ENCODE measurements at regions of chr15 and their contacts with region 1.

Region 1: GRCh38 chr15:92714477-92715401 is 59.2 kb upstream of the FAM174B start:
- DNase-seq: peak; percentile 38 to 85 (median 65)
- ATAC-seq: peak; percentile 86 to 93 (median 90)
- H3K4me3 ChIP-seq: peak overlapping the region; percentile 50 to 72
- H3K4me3 Mint-ChIP-seq: peak overlapping the region; percentile 55 to 83 (median 70)
- H3K27ac ChIP-seq: no peak overlapping the region
- H3K27ac Mint-ChIP-seq: no peak overlapping the region
- H3K4me1 ChIP-seq: peaks cover 0 to 9% of the 10 kb centered on the region in 2 experiments
- H3K4me1 Mint-ChIP-seq: peaks cover 5 to 10% (median 8%) of the 10 kb centered on the region in 3 donors
- H3K27me3 ChIP-seq: peaks cover 0 to 32% of the 10 kb centered on the region in 2 experiments
- H3K27me3 Mint-ChIP-seq: peaks cover 10 to 29% of the 10 kb centered on the region in 2 donors

Region 2: DNA sequence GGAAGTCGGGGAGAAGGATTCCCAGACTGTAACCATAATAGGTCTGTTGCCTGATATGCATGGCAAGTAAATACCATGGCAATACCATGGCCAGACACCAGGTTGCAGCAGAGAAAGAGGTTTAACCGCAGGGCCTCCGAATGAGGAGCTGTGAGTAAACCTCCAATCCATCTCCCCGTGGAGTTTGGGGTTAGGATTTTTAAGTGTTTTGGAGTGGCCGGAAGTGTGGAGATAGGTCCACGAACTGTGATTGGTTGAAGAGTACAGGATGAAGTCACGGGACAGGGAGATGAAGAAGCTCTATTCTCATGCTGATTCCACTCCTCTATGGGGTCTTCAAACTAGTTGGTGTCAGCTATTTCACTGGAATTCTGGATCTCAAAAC is 193.1 kb before region 1 on chr15:
- CTCF ChIA-PET with region 1: interaction called, 3 to 13 read pairs
- POLR2A ChIA-PET with region 1: no interaction called
- DNase-seq: peak in 31 of 35 experiments; percentile 2 to 56 (median 17)
- ATAC-seq: peak in 3 of 4 experiments; percentile 58 to 73 (median 60)
- H3K4me3 ChIP-seq: no peak overlapping the region
- H3K4me3 Mint-ChIP-seq: no peak overlapping the region
- H3K27ac ChIP-seq: no peak overlapping the region
- H3K27ac Mint-ChIP-seq: no peak overlapping the region
- H3K4me1 ChIP-seq: peaks cover 0 to 2% of the 10 kb centered on the region in 2 experiments
- H3K4me1 Mint-ChIP-seq: peaks cover 0 to 9% (median 2%) of the 10 kb centered on the region in 3 donors
- H3K27me3 ChIP-seq: no peaks in the 10 kb centered on the region
- H3K27me3 Mint-ChIP-seq: peaks cover 5 to 8% of the 10 kb centered on the region in 2 donors

Region 3: GRCh38 chr15:92578096-92578835 is 136.5 kb before region 1 on chr15:
- CTCF ChIA-PET with region 1: no interaction called
- POLR2A ChIA-PET with region 1: no interaction called
- DNase-seq: no peak
- ATAC-seq: no peak
- H3K4me3 ChIP-seq: no peak overlapping the region
- H3K4me3 Mint-ChIP-seq: no peak overlapping the region
- H3K27ac ChIP-seq: no peak overlapping the region
- H3K27ac Mint-ChIP-seq: no peak overlapping the region
- H3K4me1 ChIP-seq: no peaks in the 10 kb centered on the region
- H3K4me1 Mint-ChIP-seq: no peaks in the 10 kb centered on the region
- H3K27me3 ChIP-seq: peaks cover 0 to 24% of the 10 kb centered on the region in 2 experiments
- H3K27me3 Mint-ChIP-seq: peaks cover 9 to 39% of the 10 kb centered on the region in 2 donors

Region 4: DNA sequence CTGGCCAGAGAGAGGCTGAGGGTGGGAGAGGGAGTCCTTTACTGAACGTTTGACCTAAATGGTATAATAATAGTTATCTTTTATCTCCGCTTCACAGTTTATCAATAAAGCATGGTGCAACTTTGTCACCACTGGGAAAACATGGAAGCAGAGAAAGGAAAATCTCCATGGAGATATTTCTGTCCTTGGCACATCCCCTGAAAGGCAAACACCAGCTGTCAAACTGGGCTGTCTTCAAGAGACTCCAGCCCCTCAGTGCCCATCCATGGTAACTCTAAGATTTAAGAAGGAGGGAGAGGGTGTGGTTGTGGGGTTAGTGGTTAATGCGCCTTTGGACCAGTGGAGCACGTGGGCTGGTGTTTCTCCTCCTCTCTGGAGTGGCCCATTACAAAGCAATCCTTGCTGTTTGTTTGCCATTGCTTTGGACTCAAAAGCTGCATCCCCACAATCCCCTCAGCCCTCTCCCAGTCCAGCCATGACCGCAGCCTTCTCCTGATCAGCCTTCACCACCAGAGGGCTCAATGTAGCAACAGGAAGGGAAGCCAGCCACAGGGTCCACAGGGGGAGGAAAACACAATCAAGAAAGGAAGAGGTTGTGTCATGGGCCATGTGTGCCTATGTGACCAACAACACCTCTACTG is 20.9 kb before region 1 on chr15:
- CTCF ChIA-PET with region 1: no interaction called
- POLR2A ChIA-PET with region 1: no interaction called
- DNase-seq: no peak
- ATAC-seq: no peak
- H3K4me3 ChIP-seq: no peak overlapping the region
- H3K4me3 Mint-ChIP-seq: no peak overlapping the region
- H3K27ac ChIP-seq: no peak overlapping the region
- H3K27ac Mint-ChIP-seq: no peak overlapping the region
- H3K4me1 ChIP-seq: no peaks in the 10 kb centered on the region
- H3K4me1 Mint-ChIP-seq: no peaks in the 10 kb centered on the region
- H3K27me3 ChIP-seq: peaks cover 0 to 11% of the 10 kb centered on the region in 2 experiments
- H3K27me3 Mint-ChIP-seq: peaks cover 7 to 18% of the 10 kb centered on the region in 2 donors

Measured in T-cell (primary cell).